ENCODE measurements at regions of chr17 and their contacts with region 1.

Region 1: GRCh38 chr17:44186307-44187130 is at the start of gene TMUB2:
- DNase-seq: peak; percentile 99
- H3K4me3 Mint-ChIP-seq: peak within 1 kb of the TSS; percentile 100
- H3K27ac Mint-ChIP-seq: peak within 1 kb of the TSS; percentile 95
- H3K4me1 Mint-ChIP-seq: peaks cover 55% of the 10 kb centered on the region
- H3K27me3 Mint-ChIP-seq: no peaks in the 10 kb centered on the region
- total RNA-seq, gene TMUB2: 42.2 to 42.7 TPM

Region 2: DNA sequence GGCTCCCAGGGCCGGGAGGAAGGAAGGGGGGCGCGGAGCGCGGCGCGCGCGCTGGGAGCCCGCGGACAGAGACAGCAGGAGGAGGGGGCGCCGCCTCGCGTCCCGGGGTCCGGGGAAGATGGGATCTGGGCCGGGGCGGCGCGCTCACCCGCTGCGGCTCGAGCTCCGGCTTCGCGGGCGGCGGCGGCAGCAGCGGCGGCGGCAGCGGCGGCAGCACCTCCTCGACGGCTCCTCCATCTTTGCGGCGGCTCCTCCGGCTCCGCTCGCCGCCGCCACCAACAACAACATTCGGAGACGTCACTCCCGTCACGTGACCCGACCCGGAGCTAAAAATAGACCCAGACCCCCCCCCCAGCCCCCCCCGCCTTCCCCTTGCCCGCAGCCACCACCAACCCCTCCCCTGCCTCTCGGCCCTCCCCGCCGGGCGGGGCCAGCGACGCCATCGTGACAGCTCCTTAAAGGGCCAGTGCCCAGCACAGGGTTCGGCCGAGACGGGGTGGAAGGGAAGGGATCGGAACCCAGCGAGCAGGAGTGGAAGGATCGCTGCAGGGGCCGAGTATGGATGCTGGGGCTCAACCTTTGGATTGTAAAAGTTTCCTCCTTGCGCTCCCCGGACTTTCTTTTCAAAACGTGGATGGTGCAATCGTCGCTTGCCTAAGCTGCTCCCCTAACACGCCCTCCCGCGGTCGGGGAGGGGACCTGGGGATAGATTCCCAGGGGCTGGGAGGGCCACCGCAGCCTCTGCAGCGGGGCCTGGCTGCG is 63.0 kb before region 1 on chr17 and contains the start of gene HDAC5:
- CTCF ChIA-PET with region 1: interaction called, 15 read pairs
- POLR2A ChIA-PET with region 1: interaction called, 38 read pairs
- DNase-seq: peak; percentile 97
- H3K4me3 Mint-ChIP-seq: peak within 1 kb of the TSS; percentile 90
- H3K27ac Mint-ChIP-seq: peak within 1 kb of the TSS; percentile 83
- H3K4me1 Mint-ChIP-seq: peaks cover 22% of the 10 kb centered on the region
- H3K27me3 Mint-ChIP-seq: peaks cover 2% of the 10 kb centered on the region
- total RNA-seq, gene HDAC5: 42.2 to 42.7 TPM

Region 3: GRCh38 chr17:44199553-44200477 is 13.3 kb after region 1 on chr17 and contains the start of gene ATXN7L3:
- CTCF ChIA-PET with region 1: interaction called, 21 read pairs
- POLR2A ChIA-PET with region 1: interaction called, 127 read pairs
- DNase-seq: peak; percentile 100
- H3K4me3 Mint-ChIP-seq: peak within 1 kb of the TSS; percentile 90
- H3K27ac Mint-ChIP-seq: peak within 1 kb of the TSS; percentile 95
- H3K4me1 Mint-ChIP-seq: peaks cover 59% of the 10 kb centered on the region
- H3K27me3 Mint-ChIP-seq: no peaks in the 10 kb centered on the region
- total RNA-seq, gene ATXN7L3: 106 to 107 TPM

Region 4: GRCh38 chr17:44218344-44219107 is 32.0 kb after region 1 on chr17:
- CTCF ChIA-PET with region 1: interaction called, 11 read pairs
- POLR2A ChIA-PET with region 1: interaction called, 504 read pairs
- DNase-seq: peak; percentile 89
- H3K4me3 Mint-ChIP-seq: peak overlapping the region; percentile 90
- H3K27ac Mint-ChIP-seq: peak overlapping the region; percentile 81
- H3K4me1 Mint-ChIP-seq: peaks cover 47% of the 10 kb centered on the region
- H3K27me3 Mint-ChIP-seq: no peaks in the 10 kb centered on the region